ENCODE measurements at regions of chr15 and their contacts with region 1.

Region 1: DNA sequence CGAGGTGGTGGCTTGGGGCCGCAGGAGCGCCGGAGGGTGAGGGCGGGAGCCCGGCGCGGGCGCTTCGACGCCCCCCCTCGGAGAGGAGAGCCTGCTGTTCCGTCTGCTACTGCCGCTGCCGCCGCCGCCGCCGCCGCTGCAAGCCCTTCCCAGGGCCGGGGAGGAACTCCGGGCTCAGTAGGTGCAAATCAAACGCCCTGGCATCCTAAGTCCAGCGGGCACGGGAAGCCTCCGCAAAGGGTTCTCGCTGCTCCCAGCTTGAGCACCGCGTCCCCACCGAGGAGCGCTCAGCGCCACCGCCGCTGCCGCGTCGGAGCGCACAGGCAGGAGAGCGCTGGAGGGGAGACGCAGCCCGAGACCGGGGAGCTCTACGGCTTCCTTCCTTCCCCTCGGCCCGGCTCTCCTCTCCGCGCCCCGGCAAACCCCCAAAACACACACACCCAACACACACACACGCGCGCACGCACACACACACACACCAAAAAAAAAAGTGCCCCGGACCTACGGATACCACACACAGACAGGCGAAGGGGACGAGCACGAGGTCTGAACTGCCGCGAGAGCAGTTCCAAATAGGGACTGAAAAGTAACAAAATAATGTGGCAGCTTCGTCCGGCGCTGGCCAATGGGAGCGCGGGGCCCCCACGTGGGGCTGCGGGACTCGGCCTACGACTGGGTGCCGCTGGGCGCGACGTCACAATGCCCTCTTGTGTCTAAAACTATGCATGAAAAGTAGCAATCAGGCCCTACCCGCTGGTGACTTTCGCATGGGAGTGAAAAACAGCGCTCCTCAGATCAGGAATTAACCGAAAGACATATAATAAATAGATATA is at the start of gene TLE3:
- DNase-seq: peak; percentile 94 to 99 (median 97)
- H3K4me3 ChIP-seq: peak within 1 kb of the TSS; percentile 86
- H3K4me3 Mint-ChIP-seq: peak within 1 kb of the TSS; percentile 95 to 100 (median 98)
- H3K27ac ChIP-seq: peak within 1 kb of the TSS; percentile 85
- H3K27ac Mint-ChIP-seq: peak within 1 kb of the TSS; percentile 90 to 100 (median 98)
- H3K4me1 ChIP-seq: peaks cover 62% of the 10 kb centered on the region
- H3K4me1 Mint-ChIP-seq: peaks cover 48 to 64% (median 54%) of the 10 kb centered on the region in 3 donors
- H3K27me3 ChIP-seq: no peaks in the 10 kb centered on the region
- H3K27me3 Mint-ChIP-seq: peaks cover 4 to 21% of the 10 kb centered on the region in 2 donors
- total RNA-seq, gene TLE3: 73.1 to 76.5 TPM

Region 2: GRCh38 chr15:69452692-69453521 is 644.6 kb before region 1 on chr15 and contains the start of gene RPLP1:
- CTCF ChIA-PET with region 1: no interaction called
- POLR2A ChIA-PET with region 1: interaction called, 10 read pairs
- DNase-seq: peak; percentile 91 to 98 (median 94)
- H3K4me3 ChIP-seq: peak within 1 kb of the TSS; percentile 59
- H3K4me3 Mint-ChIP-seq: peak within 1 kb of the TSS; percentile 90 to 99 (median 95)
- H3K27ac ChIP-seq: peak within 1 kb of the TSS; percentile 94
- H3K27ac Mint-ChIP-seq: peak within 1 kb of the TSS; percentile 87 to 99 (median 98)
- H3K4me1 ChIP-seq: peaks cover 25% of the 10 kb centered on the region
- H3K4me1 Mint-ChIP-seq: peaks cover 36 to 48% (median 42%) of the 10 kb centered on the region in 3 donors
- H3K27me3 ChIP-seq: no peaks in the 10 kb centered on the region
- H3K27me3 Mint-ChIP-seq: peaks cover 0 to 2% of the 10 kb centered on the region in 2 donors
- total RNA-seq, gene RPLP1: 2,216 to 2,332 TPM

Region 3: GRCh38 chr15:69719527-69720240 is 377.9 kb before region 1 on chr15:
- CTCF ChIA-PET with region 1: interaction called, 5 read pairs
- POLR2A ChIA-PET with region 1: interaction called, 14 read pairs
- DNase-seq: peak; percentile 59 to 89 (median 62)
- H3K4me3 ChIP-seq: no peak overlapping the region
- H3K4me3 Mint-ChIP-seq: peak overlapping the region in 6 of 7 donors; percentile 28 to 84 (median 58)
- H3K27ac ChIP-seq: peak overlapping the region; percentile 58
- H3K27ac Mint-ChIP-seq: peak overlapping the region; percentile 93 to 99 (median 98)
- H3K4me1 ChIP-seq: peaks cover 77% of the 10 kb centered on the region
- H3K4me1 Mint-ChIP-seq: peaks cover 91 to 99% (median 99%) of the 10 kb centered on the region in 3 donors
- H3K27me3 ChIP-seq: no peaks in the 10 kb centered on the region
- H3K27me3 Mint-ChIP-seq: peaks cover 0 to 1% of the 10 kb centered on the region in 2 donors

Region 4: GRCh38 chr15:69762373-69763148 is 335.0 kb before region 1 on chr15:
- CTCF ChIA-PET with region 1: interaction called, 3 read pairs
- POLR2A ChIA-PET with region 1: interaction called, 10 read pairs
- DNase-seq: no peak
- H3K4me3 ChIP-seq: no peak overlapping the region
- H3K4me3 Mint-ChIP-seq: no peak overlapping the region
- H3K27ac ChIP-seq: no peak overlapping the region
- H3K27ac Mint-ChIP-seq: peak overlapping the region in 4 of 8 donors; percentile 0 to 40 (median 19)
- H3K4me1 ChIP-seq: peaks cover 47% of the 10 kb centered on the region
- H3K4me1 Mint-ChIP-seq: peaks cover 50 to 62% (median 59%) of the 10 kb centered on the region in 3 donors
- H3K27me3 ChIP-seq: no peaks in the 10 kb centered on the region
- H3K27me3 Mint-ChIP-seq: peaks cover 10 to 14% of the 10 kb centered on the region in 2 donors

Region 5: GRCh38 chr15:69861331-69862171 is 236.0 kb before region 1 on chr15:
- CTCF ChIA-PET with region 1: no interaction called
- POLR2A ChIA-PET with region 1: no interaction called
- DNase-seq: no peak
- H3K4me3 ChIP-seq: no peak overlapping the region
- H3K4me3 Mint-ChIP-seq: no peak overlapping the region
- H3K27ac ChIP-seq: no peak overlapping the region
- H3K27ac Mint-ChIP-seq: no peak overlapping the region
- H3K4me1 ChIP-seq: peaks cover 16% of the 10 kb centered on the region
- H3K4me1 Mint-ChIP-seq: peaks cover 10 to 17% (median 12%) of the 10 kb centered on the region in 3 donors
- H3K27me3 ChIP-seq: no peaks in the 10 kb centered on the region
- H3K27me3 Mint-ChIP-seq: peaks cover 0 to 7% of the 10 kb centered on the region in 2 donors

Region 6: DNA sequence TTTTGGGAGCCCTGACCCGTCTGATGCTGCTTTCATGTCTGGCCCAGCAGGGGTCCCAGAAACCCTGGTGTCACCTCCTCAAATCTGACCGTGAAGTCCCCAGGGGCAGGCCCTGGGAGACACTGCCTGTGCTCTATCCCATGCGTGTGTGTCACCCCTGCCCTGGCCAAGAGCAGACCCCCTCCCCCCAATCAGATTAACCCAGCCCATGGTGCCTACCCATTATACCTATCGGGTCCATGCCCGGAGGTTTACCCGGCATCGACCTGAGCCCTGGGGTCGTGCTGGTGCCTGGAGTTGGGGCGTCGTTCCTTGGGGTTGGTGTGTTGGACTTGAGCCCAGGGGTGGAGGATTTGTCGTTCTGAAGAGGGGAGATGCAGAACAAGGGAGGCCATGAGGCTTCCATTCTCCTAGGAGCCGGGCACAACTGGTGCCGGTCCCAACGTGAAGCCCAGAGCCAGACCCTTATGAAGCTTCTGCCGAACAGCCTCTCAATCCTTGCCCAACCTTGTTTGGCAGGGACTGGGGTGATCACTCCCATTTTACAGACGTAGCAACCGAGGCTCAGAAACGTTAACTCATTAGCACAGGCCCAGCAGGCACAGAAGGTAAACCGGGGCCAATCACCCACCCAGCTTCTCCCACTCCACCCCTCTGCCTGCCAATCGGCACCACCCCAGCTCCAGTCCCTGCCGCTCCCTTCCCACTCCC is 39.5 kb before region 1 on chr15:
- CTCF ChIA-PET with region 1: no interaction called
- POLR2A ChIA-PET with region 1: interaction called, 11 read pairs
- DNase-seq: peak in 1 of 5 donors; percentile 50
- H3K4me3 ChIP-seq: no peak overlapping the region
- H3K4me3 Mint-ChIP-seq: no peak overlapping the region
- H3K27ac ChIP-seq: no peak overlapping the region
- H3K27ac Mint-ChIP-seq: peak overlapping the region in 1 of 8 donors; percentile 26
- H3K4me1 ChIP-seq: no peaks in the 10 kb centered on the region
- H3K4me1 Mint-ChIP-seq: no peaks in the 10 kb centered on the region
- H3K27me3 ChIP-seq: no peaks in the 10 kb centered on the region
- H3K27me3 Mint-ChIP-seq: no peaks in the 10 kb centered on the region

Region 7: DNA sequence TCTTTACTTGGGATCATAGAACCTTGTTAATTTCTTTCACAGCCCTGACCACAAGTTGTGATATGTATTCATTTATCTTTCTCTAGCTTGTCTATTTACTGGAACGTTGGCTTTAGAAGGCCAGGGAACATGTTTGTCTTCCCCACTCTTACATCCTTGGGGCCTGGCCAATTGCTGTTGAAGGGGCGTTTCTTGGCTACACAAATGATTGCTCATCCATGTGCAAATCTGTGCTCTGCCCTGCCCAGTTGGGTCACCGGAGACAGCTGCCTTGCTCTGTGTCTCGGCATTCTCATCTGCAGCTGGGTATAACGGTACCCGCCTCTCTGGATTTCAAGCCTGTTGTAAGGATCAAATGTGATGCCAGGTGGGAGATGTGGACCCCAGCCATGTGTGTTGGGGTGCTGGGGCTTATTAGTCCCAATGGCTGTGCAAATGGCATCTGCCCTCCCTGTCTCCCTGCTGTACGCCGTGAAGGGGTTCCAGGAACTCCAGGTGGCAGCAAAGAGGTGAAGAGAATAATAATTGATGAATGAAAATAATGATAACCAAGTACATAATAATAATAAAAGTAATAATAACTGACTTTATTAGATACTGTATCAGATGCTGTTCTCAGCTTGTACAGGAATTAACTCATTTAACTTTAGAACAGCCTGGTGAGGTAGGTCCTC is 24.2 kb after region 1 on chr15:
- CTCF ChIA-PET with region 1: no interaction called
- POLR2A ChIA-PET with region 1: no interaction called
- DNase-seq: no peak
- H3K4me3 ChIP-seq: no peak overlapping the region
- H3K4me3 Mint-ChIP-seq: no peak overlapping the region
- H3K27ac ChIP-seq: no peak overlapping the region
- H3K27ac Mint-ChIP-seq: no peak overlapping the region
- H3K4me1 ChIP-seq: no peaks in the 10 kb centered on the region
- H3K4me1 Mint-ChIP-seq: no peaks in the 10 kb centered on the region
- H3K27me3 ChIP-seq: no peaks in the 10 kb centered on the region
- H3K27me3 Mint-ChIP-seq: peaks cover 4 to 6% of the 10 kb centered on the region in 2 donors

Region 8: DNA sequence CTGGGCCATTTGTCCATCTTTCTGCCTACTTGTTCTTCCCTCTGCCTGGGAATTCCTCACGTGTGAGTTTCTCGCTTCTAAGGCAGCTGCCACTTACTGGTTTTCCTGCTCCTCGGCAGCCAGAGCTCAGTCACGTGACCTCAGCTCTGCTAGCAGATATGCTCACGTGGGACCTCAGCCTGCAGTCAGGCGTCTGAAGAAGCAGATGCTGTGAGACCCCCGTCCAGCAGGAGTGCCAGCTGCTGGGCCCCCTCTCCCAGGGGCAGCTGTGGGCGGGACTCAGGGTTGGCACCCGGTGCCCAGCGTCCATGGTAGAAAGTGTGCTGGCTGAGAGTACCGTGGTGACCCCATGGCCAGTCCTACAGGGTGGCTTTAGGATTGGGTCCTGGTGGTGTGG is 161.5 kb after region 1 on chr15:
- CTCF ChIA-PET with region 1: no interaction called
- POLR2A ChIA-PET with region 1: interaction called, 10 read pairs
- DNase-seq: peak; percentile 41 to 78 (median 51)
- H3K4me3 ChIP-seq: peak overlapping the region; percentile 38
- H3K4me3 Mint-ChIP-seq: peak overlapping the region; percentile 72 to 85 (median 80)
- H3K27ac ChIP-seq: no peak overlapping the region
- H3K27ac Mint-ChIP-seq: peak overlapping the region; percentile 47 to 89 (median 84)
- H3K4me1 ChIP-seq: peaks cover 33% of the 10 kb centered on the region
- H3K4me1 Mint-ChIP-seq: peaks cover 39 to 62% (median 42%) of the 10 kb centered on the region in 3 donors
- H3K27me3 ChIP-seq: no peaks in the 10 kb centered on the region
- H3K27me3 Mint-ChIP-seq: peaks cover 0 to 1% of the 10 kb centered on the region in 2 donors

Measured in CD8-positive, alpha-beta memory T cell (primary cell).